Dorsolateral prefrontal cortex (tissue), 120 donors: ENCODE measurements at regions of chr20 and their contacts with region 1.

Region 1: DNA sequence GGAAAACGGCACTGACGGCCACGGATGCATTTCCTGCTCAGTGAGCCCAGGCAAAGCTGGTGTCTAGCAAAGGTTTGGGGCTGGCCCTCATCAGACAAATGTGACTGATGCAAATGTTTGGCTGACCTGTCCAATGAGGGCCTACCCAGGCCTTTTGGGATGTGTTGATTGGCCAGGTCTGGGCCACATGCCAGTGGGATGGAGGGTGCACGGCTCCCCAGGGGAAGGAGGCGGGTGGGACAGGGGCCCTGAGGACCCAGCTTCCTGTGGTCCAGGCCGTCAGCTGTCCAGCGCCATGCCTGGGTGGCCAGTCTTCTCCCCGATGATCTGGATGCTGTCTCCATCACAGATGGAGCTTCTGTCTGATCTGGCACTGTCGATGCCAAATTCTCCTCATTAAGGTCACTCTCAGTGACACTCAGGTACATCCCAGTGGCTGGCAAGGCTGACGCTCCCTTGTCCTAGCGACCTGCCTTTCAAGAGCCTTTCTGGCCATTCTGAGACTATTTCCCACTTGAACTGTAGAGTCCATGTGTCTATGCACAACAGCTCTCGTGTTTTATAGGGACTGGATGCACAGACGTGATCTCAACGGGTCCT is 43.0 kb downstream of the NTSR1 start:
- DNase-seq: peak in 1 of 10 donors; percentile 28
- H3K4me3 ChIP-seq: no peak overlapping the region
- H3K27ac ChIP-seq: no peak overlapping the region
- H3K27me3 ChIP-seq: peaks cover 0 to 4% (median 0%) of the 10 kb centered on the region in 45 donors
- CTCF ChIP-seq: no peak

Region 2: GRCh38 chr20:62685781-62686555 is 65.7 kb before region 1 on chr20:
- intact Hi-C with region 1: loop called in 1 of 2 experiments (anchors 2 kb)
- DNase-seq: peak in 3 of 10 donors; percentile 50 to 59 (median 52)
- H3K4me3 ChIP-seq: no peak overlapping the region
- H3K27ac ChIP-seq: no peak overlapping the region
- H3K27me3 ChIP-seq: peaks cover 0 to 3% (median 0%) of the 10 kb centered on the region in 45 donors
- CTCF ChIP-seq: no peak